KBM-7 (cell line): ENCODE measurements at regions of chr7 and their contacts with region 1.

Region 1: DNA sequence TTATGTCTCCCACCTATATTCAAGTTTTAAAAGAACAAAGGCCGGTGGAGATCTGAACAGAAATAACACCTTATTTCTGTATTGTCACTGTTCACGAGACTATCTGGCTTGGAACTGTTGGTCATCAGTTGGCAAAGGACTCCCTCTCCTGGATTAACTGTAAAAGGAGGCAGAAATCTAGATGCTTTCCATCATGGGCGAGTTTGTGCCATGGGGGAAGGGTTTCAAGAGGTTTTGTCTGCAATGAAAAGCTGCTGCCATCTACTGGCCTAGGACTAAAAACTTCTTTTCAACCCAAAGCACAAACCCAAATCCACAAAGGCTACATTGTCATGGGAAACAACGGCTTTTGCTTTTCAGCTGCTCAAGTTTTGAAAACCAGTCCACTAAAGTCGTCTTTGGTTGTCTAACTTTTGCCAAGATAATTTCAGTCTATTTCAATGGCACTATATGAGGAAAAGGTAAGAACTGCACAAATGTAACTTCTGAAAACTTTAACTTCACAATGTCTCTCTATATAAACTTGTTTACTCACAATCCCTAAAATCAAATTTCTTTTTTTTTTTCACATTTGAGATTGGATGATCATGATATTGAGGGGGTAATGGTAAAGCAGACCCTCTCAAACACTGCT is 196.8 kb downstream of the SKAP2 start:
- DNase-seq: peak; percentile 94

Region 2: DNA sequence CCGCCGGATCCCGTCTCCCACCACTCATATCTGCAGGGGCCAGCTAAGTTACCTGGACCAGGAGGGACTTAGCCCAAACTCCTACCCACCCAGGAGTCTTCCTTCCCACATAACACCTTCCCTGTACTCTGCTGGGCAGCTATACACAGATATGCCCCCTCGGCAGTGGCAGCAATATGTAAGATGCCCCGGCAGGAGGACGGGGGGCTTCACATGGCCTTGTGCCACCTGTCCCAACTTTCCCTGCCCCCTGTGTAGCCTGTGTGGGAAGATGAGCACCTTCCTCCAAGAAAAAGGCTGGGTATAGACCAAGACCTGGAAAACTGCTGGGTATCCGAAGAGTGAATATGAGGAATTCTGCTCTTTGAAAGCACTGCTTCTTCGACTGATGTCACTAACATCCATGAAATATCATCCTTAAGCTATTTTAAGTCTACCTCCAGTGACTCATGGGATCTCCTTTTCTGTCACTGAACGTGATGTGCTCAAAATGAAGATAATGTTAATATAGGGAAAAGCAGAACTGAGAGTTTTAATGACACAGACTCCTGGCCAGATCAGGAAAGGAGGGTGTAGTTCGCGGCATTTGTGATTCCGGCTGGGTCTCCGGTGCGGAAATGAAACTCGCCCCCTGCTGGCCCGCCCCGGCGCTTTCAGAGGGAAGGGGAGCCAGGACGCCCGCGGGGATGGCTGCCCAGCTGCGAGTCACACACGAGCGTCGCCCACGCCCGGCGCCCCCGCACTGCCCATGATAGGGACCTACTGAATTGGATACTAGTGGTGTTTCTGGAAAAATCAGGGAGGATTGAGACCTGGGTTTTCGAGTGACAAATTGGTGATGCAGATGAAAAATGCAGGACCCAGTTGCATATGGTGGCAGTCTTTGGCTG is 772.5 kb before region 1 on chr7:
- in situ Hi-C with region 1: loop called (anchors 25 kb)
- DNase-seq: peak; percentile 92

Region 3: GRCh38 chr7:26398756-26399501 is 268.7 kb before region 1 on chr7:
- in situ Hi-C with region 1: loop called (anchors 10 kb)
- DNase-seq: peak; percentile 93

Region 4: DNA sequence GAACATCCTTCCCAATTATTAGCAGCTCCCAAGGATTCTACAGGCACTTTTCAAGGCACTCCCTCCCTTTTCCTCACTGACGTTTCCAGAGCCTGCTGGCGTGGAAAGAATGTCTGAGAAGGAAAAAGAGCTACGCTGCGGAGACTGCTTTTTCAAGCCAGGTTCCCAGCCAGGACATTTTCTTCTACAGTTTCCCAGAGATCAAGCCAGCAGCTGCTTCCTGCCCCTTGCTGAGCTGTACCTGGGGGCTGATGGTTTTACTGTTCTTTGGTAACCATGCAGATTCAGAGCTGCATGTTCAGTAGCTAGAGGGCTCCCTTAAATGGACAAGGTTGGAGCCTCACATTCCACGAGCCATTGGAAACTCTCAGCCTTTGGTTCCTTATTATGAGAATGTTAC is 708.3 kb after region 1 on chr7:
- in situ Hi-C with region 1: no loop called
- DNase-seq: no peak

Region 5: DNA sequence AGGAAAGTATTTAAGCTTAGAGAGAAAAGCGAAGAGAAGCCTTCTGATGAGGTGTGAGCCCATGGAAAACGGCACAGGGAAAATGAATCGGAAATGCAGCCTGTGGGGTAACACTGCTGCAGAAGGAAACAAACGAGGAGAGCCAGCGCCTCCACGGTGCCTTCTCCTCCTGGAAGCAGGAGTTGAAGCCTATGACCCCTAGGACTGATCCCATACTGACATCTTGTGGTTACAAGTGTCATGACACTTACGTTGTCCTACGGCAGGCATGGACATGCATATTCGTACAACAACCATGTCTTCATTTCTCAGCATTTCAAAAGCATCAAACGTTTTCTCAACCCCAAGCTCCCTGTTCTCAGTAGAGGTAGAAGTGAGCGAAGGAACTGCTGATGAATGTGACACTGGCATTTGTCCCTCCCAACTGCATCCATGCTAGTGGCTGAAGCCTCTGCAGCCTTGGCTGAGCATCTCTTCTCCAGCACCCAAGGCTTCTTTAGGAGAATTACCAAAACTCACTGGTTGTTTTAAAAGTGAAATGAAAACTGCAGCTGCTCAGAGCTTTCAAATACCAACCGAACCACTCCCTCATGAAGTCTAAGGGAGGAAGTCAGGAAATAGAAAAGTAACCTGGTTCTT is 1352.8 kb after region 1 on chr7:
- in situ Hi-C with region 1: no loop called
- DNase-seq: peak; percentile 81